Thyroid gland (tissue), 4 donors: ENCODE measurements at regions of chr15 and their contacts with region 1.

Region 1: GRCh38 chr15:100349696-100350433 is 8.1 kb upstream of the ADAMTS17 start:
- DNase-seq: peak; percentile 91 to 94
- H3K4me3 ChIP-seq: peak overlapping the region; percentile 27 to 75 (median 51)
- H3K27ac ChIP-seq: peak overlapping the region; percentile 90 to 92 (median 90)
- H3K4me1 ChIP-seq: peaks cover 10 to 12% of the 10 kb centered on the region in 2 donors
- H3K27me3 ChIP-seq: no peaks in the 10 kb centered on the region
- CTCF ChIP-seq: peak; percentile 46 to 94 (median 76)
- POLR2A ChIP-seq: peak in 1 of 2 donors; percentile 38

Region 2: DNA sequence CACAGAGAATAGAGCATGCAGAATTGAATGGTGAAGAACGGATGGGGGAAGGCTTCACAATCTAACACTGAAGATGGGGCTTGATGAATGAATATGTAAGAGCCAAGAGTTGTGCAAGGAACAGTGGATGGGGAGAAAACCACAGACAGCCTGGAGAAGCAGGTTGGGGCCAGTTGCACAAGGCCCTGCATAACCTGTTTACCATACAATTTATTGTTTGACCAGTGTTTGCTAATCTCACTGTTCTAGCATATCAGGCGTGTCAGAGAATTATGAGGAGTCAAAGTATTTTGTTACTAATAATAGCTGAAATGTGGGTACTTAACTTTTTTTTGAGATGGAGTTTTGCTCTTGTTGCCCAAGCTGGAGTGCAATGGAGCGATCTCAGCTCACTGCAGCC is 215.7 kb after region 1 on chr15:
- intact Hi-C with region 1: loop called (anchors 10 kb)
- DNase-seq: no peak
- H3K4me3 ChIP-seq: no peak overlapping the region
- H3K27ac ChIP-seq: no peak overlapping the region
- H3K4me1 ChIP-seq: no peaks in the 10 kb centered on the region
- H3K27me3 ChIP-seq: no peaks in the 10 kb centered on the region
- CTCF ChIP-seq: no peak
- POLR2A ChIP-seq: no peak

Region 3: DNA sequence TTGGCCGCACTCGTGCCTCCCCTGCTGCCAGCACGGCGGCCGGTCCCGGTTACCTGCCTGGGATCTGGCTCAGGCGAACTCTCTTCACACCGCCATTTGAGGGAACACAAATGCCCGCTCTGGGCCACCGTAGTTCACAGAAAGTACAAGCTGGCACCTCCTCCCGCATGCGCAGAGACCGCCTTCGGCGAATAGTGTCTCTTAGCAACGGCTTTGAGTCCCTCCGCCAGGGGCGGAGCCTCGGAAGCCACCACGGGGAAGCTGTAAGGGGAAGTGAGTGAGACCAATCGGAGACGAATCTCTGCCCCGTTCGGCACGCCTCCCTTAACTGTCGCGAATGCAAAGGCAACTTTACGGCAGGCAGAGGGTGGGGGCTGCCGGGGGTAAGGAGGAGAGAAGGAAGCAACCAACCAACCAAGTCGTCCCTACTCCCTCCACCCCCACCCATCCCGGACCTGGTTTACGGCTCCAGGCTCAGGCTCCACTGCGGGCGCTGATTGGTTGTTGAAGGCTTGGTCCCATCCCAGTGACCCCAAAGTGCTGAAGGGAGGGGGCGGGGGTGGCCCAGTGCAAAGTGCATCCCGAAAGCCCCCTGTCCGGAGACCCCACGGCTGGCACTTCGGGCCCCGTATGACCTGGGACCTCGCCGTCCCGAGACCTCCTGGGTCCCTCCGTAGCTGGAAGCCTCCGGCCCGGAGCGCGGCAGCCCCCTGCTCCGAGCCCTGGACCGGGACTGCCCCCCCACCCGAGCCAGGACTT is 252.4 kb after region 1 on chr15 and contains the starts of genes ASB7 and LINS1:
- intact Hi-C with region 1: loop called (anchors 10 kb)
- DNase-seq: peak; percentile 100
- H3K4me3 ChIP-seq: peak within 1 kb of the TSS; percentile 88 to 91 (median 90)
- H3K27ac ChIP-seq: peak within 1 kb of the TSS; percentile 34 to 74 (median 65)
- H3K4me1 ChIP-seq: peaks cover 32 to 45% of the 10 kb centered on the region in 2 donors
- H3K27me3 ChIP-seq: no peaks in the 10 kb centered on the region
- CTCF ChIP-seq: no peak
- POLR2A ChIP-seq: peak in 1 of 2 donors; percentile 34
- total RNA-seq, gene ASB7: 16.2 to 21.0 (median 19.7) TPM
- total RNA-seq, gene LINS1: 32.9 to 63.0 (median 53.3) TPM

Region 4: GRCh38 chr15:100958326-100959065 is 608.6 kb after region 1 on chr15:
- intact Hi-C with region 1: no loop called
- DNase-seq: no peak
- H3K4me3 ChIP-seq: no peak overlapping the region
- H3K27ac ChIP-seq: no peak overlapping the region
- H3K4me1 ChIP-seq: peaks cover 0 to 5% of the 10 kb centered on the region in 2 donors
- H3K27me3 ChIP-seq: no peaks in the 10 kb centered on the region
- CTCF ChIP-seq: no peak
- POLR2A ChIP-seq: no peak